ENCODE measurements at regions of chrX and their contacts with region 1.

Region 1: GRCh38 chrX:2690856-2691542 is at the start of gene CD99:
- DNase-seq: peak; percentile 95
- H3K4me3 ChIP-seq: peak within 1 kb of the TSS; percentile 75 to 99 (median 93)
- H3K27ac ChIP-seq: peak within 1 kb of the TSS; percentile 82 to 97 (median 90)
- H3K4me1 ChIP-seq: peaks cover 0 to 48% (median 38%) of the 10 kb centered on the region in 4 donors
- H3K27me3 ChIP-seq: no peaks in the 10 kb centered on the region
- CTCF ChIP-seq: no peak
- EP300 ChIP-seq: no peak
- POLR2A ChIP-seq: peak; percentile 50 to 78
- total RNA-seq, gene CD99: 197 to 552 (median 326) TPM

Region 2: DNA sequence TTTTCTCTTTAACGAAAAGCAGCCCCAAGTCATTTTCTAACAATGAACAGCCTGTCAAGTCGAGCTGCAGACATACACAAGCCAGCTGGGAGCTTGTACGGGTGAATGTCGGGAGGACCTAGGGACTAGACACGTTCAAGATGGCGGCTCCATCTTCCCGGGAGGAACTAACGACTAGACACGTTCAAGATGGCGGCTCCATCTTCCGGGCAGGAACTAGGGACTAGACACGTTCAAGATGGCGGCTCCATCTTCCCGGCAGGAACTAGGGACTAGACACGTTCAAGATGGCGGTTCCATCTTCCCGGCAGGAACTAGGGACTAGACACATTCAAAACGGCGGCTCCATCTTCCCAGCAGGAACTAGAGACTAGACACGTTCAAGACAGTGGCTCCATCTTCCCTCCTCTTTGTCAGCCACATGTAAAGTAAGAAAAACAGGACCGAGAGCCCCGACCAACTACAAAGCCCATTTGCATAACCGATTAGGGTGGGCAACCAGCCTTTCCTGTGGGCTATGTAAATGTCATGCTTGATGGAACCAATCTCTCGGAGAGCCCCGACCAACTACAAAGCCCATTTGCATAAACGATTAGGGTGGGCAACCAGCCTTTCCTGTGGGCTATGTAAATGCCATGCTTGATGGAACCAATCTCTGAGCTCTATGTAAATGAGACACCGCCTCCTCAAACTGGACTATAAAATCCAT is 365.8 kb before region 1 on chrX:
- intact Hi-C with region 1: loop called (anchors 10 kb)
- DNase-seq: peak; percentile 96
- H3K4me3 ChIP-seq: peak overlapping the region in 3 of 4 donors; percentile 30 to 52 (median 39)
- H3K27ac ChIP-seq: peak overlapping the region; percentile 10 to 75 (median 67)
- H3K4me1 ChIP-seq: peaks cover 0 to 9% (median 8%) of the 10 kb centered on the region in 4 donors
- H3K27me3 ChIP-seq: no peaks in the 10 kb centered on the region
- CTCF ChIP-seq: no peak
- EP300 ChIP-seq: no peak
- POLR2A ChIP-seq: no peak

Region 3: DNA sequence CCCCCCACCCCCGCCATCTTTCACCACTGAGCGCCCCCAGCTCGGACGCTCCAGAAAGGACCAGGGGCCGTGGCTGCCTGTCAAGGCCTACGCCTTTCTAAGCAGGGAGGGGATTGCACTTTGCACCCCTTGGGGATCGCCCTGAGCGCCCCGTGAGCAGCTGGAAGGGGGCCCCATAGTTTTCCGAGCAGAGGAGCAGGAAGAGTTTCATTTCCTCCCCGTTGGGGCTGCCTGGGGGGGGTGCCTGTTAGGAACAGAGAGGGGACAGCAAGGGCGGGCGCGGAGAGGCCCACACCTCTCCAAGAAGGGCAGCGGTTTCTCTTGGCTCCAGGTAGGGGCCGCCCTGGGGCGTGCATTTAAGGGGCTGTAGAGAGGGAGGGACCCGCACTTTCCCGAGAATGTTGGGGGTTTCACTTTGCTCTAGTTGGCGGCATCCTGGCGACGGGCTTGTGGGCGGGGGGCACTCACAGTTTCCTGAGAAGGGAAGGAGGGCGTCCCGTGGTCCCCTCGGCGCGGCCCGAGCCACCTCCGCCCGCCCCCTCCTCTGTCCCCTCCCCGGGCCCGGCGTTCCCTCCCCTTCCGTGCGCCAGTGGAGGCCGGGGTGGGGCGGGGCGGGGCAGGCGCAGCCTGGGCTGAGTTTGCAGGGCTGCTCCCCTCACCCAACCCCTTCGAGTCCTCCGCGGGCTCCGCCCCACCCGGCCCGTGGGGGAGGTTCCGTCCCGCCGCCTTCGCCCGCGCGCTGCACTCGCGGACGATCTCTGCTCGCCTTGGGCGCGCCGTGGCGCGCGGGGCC is 82.2 kb before region 1 on chrX:
- intact Hi-C with region 1: loop called (anchors 5 kb)
- DNase-seq: peak; percentile 91
- H3K4me3 ChIP-seq: peak overlapping the region; percentile 63 to 89 (median 76)
- H3K27ac ChIP-seq: peak overlapping the region; percentile 73 to 83 (median 76)
- H3K4me1 ChIP-seq: peaks cover 0 to 14% (median 11%) of the 10 kb centered on the region in 4 donors
- H3K27me3 ChIP-seq: no peaks in the 10 kb centered on the region
- CTCF ChIP-seq: no peak
- EP300 ChIP-seq: no peak
- POLR2A ChIP-seq: no peak

Region 4: GRCh38 chrX:2627272-2627867 is 63.6 kb before region 1 on chrX:
- intact Hi-C with region 1: no loop called
- DNase-seq: no peak
- H3K4me3 ChIP-seq: no peak overlapping the region
- H3K27ac ChIP-seq: no peak overlapping the region
- H3K4me1 ChIP-seq: no peaks in the 10 kb centered on the region
- H3K27me3 ChIP-seq: no peaks in the 10 kb centered on the region
- CTCF ChIP-seq: peak in 2 of 4 experiments; percentile 38 to 59
- EP300 ChIP-seq: no peak
- POLR2A ChIP-seq: no peak

Region 5: DNA sequence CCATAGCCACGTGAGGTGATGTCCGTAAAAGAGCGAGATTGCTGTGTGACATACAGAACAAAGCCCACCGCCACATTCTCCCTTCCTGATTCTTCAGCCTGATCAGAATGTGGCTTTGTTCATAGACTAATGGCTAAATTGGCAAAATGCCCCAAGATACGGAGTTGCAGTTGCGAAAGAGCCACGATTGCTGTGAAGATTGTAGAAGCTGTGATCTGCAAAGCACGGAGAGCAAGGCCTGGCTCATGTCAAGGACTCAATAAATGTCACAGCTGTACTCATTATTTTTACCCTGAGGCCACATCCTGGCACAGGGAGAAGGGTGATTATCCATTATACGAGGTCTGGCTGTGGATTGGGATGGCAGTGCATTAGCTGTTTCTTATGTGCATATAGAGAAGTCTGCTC is 203.9 kb after region 1 on chrX:
- intact Hi-C with region 1: loop called (anchors 10 kb)
- DNase-seq: peak; percentile 88
- H3K4me3 ChIP-seq: no peak overlapping the region
- H3K27ac ChIP-seq: peak overlapping the region in 3 of 4 donors; percentile 22 to 61 (median 22)
- H3K4me1 ChIP-seq: peaks cover 0 to 19% (median 11%) of the 10 kb centered on the region in 4 donors
- H3K27me3 ChIP-seq: no peaks in the 10 kb centered on the region
- CTCF ChIP-seq: no peak
- EP300 ChIP-seq: peak; percentile 23 to 78 (median 38)
- POLR2A ChIP-seq: no peak

Measured in sigmoid colon (tissue), 7 donors.